ENCODE measurements at regions of chr3 and their contacts with region 1.

Region 1: GRCh38 chr3:195863121-195864006 is 45.0 kb downstream of the TNK2 start:
- DNase-seq: peak; percentile 86
- H3K4me3 Mint-ChIP-seq: peak overlapping the region; percentile 16
- H3K27ac Mint-ChIP-seq: peak overlapping the region; percentile 27
- H3K4me1 Mint-ChIP-seq: peaks cover 14% of the 10 kb centered on the region
- H3K27me3 Mint-ChIP-seq: no peaks in the 10 kb centered on the region
- CTCF ChIP-seq: peak; percentile 93

Region 2: DNA sequence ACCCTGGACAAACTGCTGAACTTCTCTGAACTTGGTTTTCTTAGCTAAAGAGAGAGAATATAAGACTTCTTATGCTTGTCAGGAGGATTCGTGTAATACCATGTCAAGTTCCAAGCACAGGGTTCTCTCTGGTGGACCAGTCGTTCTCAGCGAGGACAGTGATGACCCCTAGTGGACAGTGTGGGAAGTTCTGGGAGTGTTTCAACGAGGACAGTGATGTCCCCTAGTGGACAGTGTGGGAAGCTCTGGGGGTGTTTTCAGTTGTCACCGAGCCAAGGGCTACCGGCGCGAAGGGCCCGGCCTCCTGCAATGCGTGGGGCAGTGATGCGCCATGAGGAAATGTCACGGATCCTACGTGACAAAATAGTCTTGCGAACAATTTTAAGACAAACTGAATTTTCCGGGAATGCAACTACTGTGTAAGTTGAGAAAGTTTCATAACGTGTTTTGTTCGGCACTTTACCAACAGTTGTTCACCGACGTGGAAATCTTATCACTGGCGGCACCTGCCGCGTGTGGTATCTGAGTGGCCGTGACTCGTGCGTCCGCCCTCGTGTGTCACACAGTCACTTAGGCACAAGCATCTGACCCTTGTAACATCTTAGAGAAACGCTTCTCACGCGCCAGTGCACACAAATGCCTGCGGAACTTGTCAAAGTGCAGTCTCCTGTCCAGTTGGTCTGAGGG is 12.4 kb before region 1 on chr3:
- CTCF ChIA-PET with region 1: interaction called, 10 read pairs
- POLR2A ChIA-PET with region 1: interaction called, 3 read pairs
- intact Hi-C with region 1: no loop called
- DNase-seq: peak; percentile 91
- H3K4me3 Mint-ChIP-seq: no peak overlapping the region
- H3K27ac Mint-ChIP-seq: no peak overlapping the region
- H3K4me1 Mint-ChIP-seq: no peaks in the 10 kb centered on the region
- H3K27me3 Mint-ChIP-seq: peaks cover under 1% of the 10 kb centered on the region
- CTCF ChIP-seq: peak; percentile 100

Region 3: GRCh38 chr3:195886181-195887141 is 23.1 kb after region 1 on chr3:
- CTCF ChIA-PET with region 1: interaction called, 19 read pairs
- POLR2A ChIA-PET with region 1: no interaction called
- intact Hi-C with region 1: no loop called
- DNase-seq: no peak
- H3K4me3 Mint-ChIP-seq: no peak overlapping the region
- H3K27ac Mint-ChIP-seq: no peak overlapping the region
- H3K4me1 Mint-ChIP-seq: no peaks in the 10 kb centered on the region
- H3K27me3 Mint-ChIP-seq: no peaks in the 10 kb centered on the region
- CTCF ChIP-seq: no peak

Region 4: DNA sequence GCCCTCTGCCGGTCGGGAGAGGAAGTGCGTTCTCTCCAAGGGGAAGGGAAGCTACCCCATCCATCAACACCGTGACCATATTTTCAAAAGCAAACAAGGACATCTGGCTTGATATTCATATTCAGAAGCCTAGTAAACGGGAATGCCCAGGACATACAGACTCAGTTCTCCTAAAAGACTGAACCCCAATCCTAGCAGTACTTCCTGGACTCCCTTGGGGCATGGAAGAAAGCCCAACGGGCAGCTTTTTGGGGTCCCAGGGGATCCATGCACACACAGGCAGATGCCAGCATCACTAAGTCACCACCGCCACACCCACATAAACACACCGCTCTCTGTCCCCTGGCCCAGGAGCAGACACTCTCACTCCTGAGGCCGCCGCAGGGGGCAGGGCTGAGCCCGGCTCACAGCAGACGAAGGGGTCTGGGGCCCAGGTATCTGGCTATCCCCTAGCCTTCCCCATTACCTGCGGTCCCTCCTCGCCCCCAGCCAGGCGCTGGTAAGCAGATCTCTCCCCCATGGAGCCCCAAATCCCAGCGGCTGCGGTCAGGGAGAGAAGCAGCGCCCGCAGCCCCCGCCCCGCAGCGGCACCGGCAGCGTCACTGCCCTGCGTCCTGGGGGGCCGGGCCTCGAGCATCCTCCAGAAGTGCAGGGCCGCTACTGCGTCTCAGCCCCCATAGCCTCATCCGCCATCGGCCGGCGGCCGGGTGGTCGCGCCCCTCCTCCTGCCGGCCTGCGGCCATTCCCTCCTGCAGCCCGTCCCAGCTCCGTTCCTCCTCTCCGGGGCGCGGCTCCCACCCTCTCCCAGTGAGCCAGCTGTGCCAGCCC is 31.6 kb after region 1 on chr3:
- CTCF ChIA-PET with region 1: interaction called, 39 read pairs
- POLR2A ChIA-PET with region 1: interaction called, 27 read pairs
- intact Hi-C with region 1: loop called (anchors 1 kb)
- DNase-seq: peak; percentile 88
- H3K4me3 Mint-ChIP-seq: peak overlapping the region; percentile 76
- H3K27ac Mint-ChIP-seq: peak overlapping the region; percentile 91
- H3K4me1 Mint-ChIP-seq: peaks cover 41% of the 10 kb centered on the region
- H3K27me3 Mint-ChIP-seq: no peaks in the 10 kb centered on the region
- CTCF ChIP-seq: peak; percentile 79

Region 5: GRCh38 chr3:195909644-195910508 is 46.5 kb after region 1 on chr3:
- CTCF ChIA-PET with region 1: interaction called, 87 read pairs
- POLR2A ChIA-PET with region 1: interaction called, 25 read pairs
- intact Hi-C with region 1: loop called (anchors 1 kb)
- DNase-seq: peak; percentile 81
- H3K4me3 Mint-ChIP-seq: peak overlapping the region; percentile 83
- H3K27ac Mint-ChIP-seq: no peak overlapping the region
- H3K4me1 Mint-ChIP-seq: peaks cover 46% of the 10 kb centered on the region
- H3K27me3 Mint-ChIP-seq: no peaks in the 10 kb centered on the region
- CTCF ChIP-seq: no peak

Region 6: GRCh38 chr3:196518966-196519717 is 655.8 kb after region 1 on chr3:
- CTCF ChIA-PET with region 1: no interaction called
- POLR2A ChIA-PET with region 1: no interaction called
- intact Hi-C with region 1: loop called (anchors 5 kb)
- DNase-seq: peak; percentile 82
- H3K4me3 Mint-ChIP-seq: no peak overlapping the region
- H3K27ac Mint-ChIP-seq: no peak overlapping the region
- H3K4me1 Mint-ChIP-seq: no peaks in the 10 kb centered on the region
- H3K27me3 Mint-ChIP-seq: no peaks in the 10 kb centered on the region
- CTCF ChIP-seq: peak; percentile 65